B cell (primary cell): ENCODE measurements at regions of chr14 and their contacts with region 1.

Region 1: GRCh38 chr14:77862154-77862786 is 62.4 kb downstream of the ADCK1 start:
- DNase-seq: peak; percentile 70
- ATAC-seq: peak; percentile 58
- H3K4me3 ChIP-seq: no peak overlapping the region
- H3K4me3 Mint-ChIP-seq: no peak overlapping the region
- H3K27ac ChIP-seq: no peak overlapping the region
- H3K27ac Mint-ChIP-seq: no peak overlapping the region
- H3K4me1 ChIP-seq: no peaks in the 10 kb centered on the region
- H3K4me1 Mint-ChIP-seq: peaks cover 1% of the 10 kb centered on the region
- H3K27me3 ChIP-seq: no peaks in the 10 kb centered on the region
- H3K27me3 Mint-ChIP-seq: no peaks in the 10 kb centered on the region
- CTCF ChIP-seq: peak; percentile 85

Region 2: DNA sequence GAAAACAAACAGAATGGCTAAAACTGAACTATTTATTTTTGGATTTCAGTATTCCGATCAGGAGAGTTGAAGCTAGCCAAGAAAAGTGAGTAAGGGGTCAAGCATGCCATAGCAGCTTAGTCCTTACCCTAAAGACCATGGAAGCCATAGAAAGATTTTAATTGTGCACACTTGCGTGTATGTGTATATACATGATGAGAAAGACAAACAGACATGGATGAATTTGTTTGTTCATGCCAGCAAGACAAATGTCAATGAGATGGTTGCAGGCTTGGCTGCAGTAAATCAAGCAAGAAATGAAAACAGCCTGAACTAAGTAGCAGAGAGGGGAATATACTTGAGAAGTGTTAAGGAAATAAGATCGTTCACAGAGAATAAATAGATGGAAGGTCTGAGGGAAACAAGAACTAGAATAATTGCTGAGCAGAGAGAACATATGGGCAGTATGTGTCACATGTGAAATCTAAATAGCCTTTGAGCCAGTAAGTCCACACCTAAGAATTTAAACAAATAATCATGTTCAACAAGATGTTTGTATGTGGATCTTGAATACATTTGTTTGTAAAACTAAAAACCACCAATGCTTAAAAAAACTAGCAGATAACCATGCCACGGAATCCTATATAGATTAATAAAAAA is 116.1 kb before region 1 on chr14:
- CTCF ChIA-PET with region 1: no interaction called
- POLR2A ChIA-PET with region 1: no interaction called
- intact Hi-C with region 1: no loop called
- DNase-seq: no peak
- ATAC-seq: no peak
- H3K4me3 ChIP-seq: no peak overlapping the region
- H3K4me3 Mint-ChIP-seq: no peak overlapping the region
- H3K27ac ChIP-seq: no peak overlapping the region
- H3K27ac Mint-ChIP-seq: no peak overlapping the region
- H3K4me1 ChIP-seq: no peaks in the 10 kb centered on the region
- H3K4me1 Mint-ChIP-seq: peaks cover 2% of the 10 kb centered on the region
- H3K27me3 ChIP-seq: no peaks in the 10 kb centered on the region
- H3K27me3 Mint-ChIP-seq: no peaks in the 10 kb centered on the region
- CTCF ChIP-seq: no peak

Region 3: DNA sequence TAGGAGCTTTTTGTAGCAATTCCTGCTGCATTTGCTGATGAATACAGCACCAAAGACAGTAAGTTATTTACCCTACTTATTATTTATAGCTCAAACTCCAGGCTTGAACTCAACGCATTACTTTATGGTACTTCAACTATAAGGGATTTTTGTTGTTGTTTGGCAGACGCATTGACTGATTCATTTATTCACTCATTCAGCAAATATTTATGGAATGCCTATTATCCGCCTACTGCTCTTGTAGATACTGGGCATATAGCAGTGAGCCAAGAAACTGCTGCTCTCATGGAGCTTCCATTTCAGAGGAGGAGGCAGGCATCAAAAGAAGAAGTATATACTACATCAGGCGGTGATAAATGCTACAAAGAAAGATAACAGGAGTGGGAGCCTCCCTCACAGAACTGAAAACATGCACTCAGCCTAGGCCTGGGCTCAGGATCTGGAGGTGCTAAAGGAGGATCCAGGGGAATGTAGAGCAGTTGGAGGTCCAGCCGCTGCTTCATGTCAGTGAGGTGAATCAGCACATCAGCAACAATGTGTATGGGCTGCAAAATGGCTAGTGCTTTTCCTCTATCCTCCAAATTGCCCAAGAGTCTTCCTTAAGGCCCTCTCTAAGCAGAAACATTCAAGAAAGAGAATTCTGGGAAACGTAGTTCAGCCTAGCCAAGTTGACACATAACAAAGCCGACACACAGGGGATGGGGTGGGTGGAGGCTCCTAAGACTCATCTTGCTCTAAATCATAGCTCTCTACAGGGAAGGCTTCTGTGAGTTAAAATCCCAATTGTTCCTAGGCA is 465.4 kb after region 1 on chr14:
- CTCF ChIA-PET with region 1: no interaction called
- POLR2A ChIA-PET with region 1: no interaction called
- intact Hi-C with region 1: no loop called
- DNase-seq: no peak
- ATAC-seq: no peak
- H3K4me3 ChIP-seq: no peak overlapping the region
- H3K4me3 Mint-ChIP-seq: no peak overlapping the region
- H3K27ac ChIP-seq: no peak overlapping the region
- H3K27ac Mint-ChIP-seq: no peak overlapping the region
- H3K4me1 ChIP-seq: no peaks in the 10 kb centered on the region
- H3K4me1 Mint-ChIP-seq: no peaks in the 10 kb centered on the region
- H3K27me3 ChIP-seq: no peaks in the 10 kb centered on the region
- H3K27me3 Mint-ChIP-seq: no peaks in the 10 kb centered on the region
- CTCF ChIP-seq: no peak

Region 4: GRCh38 chr14:78598041-78598920 is 736.0 kb after region 1 on chr14:
- CTCF ChIA-PET with region 1: interaction called, 10 read pairs
- POLR2A ChIA-PET with region 1: no interaction called
- intact Hi-C with region 1: no loop called
- DNase-seq: peak; percentile 54
- ATAC-seq: peak; percentile 57
- H3K4me3 ChIP-seq: no peak overlapping the region
- H3K4me3 Mint-ChIP-seq: no peak overlapping the region
- H3K27ac ChIP-seq: no peak overlapping the region
- H3K27ac Mint-ChIP-seq: no peak overlapping the region
- H3K4me1 ChIP-seq: no peaks in the 10 kb centered on the region
- H3K4me1 Mint-ChIP-seq: no peaks in the 10 kb centered on the region
- H3K27me3 ChIP-seq: no peaks in the 10 kb centered on the region
- H3K27me3 Mint-ChIP-seq: peaks cover 11% of the 10 kb centered on the region
- CTCF ChIP-seq: peak; percentile 83